Activated CD4-positive, alpha-beta T cell treated with anti-CD3 and anti-CD28 coated beads, Interleukin-2, amount 10 ng/mL, durations not matched to agents 24 days and 14 days (primary cell): ENCODE measurements at regions of chr19 and their contacts with region 1.

Region 1: GRCh38 chr19:10717356-10718204 is at the start of gene DNM2:
- DNase-seq: peak; percentile 100
- H3K4me3 Mint-ChIP-seq: peak within 1 kb of the TSS; percentile 99
- H3K27ac Mint-ChIP-seq: peak within 1 kb of the TSS; percentile 83
- H3K4me1 Mint-ChIP-seq: peaks cover 22% of the 10 kb centered on the region
- H3K27me3 Mint-ChIP-seq: no peaks in the 10 kb centered on the region
- total RNA-seq, gene DNM2: 198 and 211 TPM in 2 replicates

Region 2: DNA sequence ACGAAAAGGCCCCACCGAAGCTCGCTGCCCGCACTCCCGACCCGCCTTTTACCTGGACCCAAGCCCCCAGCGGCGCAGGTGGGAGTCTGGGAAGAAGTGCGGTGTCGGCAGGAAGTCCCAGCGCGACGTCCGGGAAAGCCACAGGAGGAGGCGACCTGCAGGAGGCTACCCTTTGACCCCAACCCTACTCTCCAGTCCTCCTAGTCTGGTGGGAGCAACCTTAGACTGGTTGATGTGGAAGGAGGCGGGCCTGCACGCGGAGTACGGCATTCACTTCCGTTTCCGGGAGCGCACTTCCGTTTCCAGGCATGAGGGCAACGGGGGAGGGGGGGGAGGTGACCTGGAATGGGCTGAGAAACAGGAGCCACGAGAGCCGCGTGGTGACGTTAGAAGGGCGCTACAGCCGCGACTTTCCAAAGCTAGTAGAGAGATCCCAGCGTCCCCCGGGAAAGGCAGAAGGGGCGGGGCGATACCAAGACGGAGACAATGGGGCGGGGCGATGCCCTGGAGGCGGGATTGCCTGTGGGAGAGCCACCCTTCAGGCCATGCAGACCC is 1310.7 kb before region 1 on chr19:
- intact Hi-C with region 1: no loop called
- DNase-seq: peak; percentile 68
- H3K4me3 Mint-ChIP-seq: peak overlapping the region; percentile 77
- H3K27ac Mint-ChIP-seq: no peak overlapping the region
- H3K4me1 Mint-ChIP-seq: no peaks in the 10 kb centered on the region
- H3K27me3 Mint-ChIP-seq: no peaks in the 10 kb centered on the region

Region 3: GRCh38 chr19:10730923-10731322 is 13.3 kb after region 1 on chr19:
- intact Hi-C with region 1: loop called (anchors 1 kb)
- DNase-seq: no peak
- H3K4me3 Mint-ChIP-seq: no peak overlapping the region
- H3K27ac Mint-ChIP-seq: peak overlapping the region; percentile 90
- H3K4me1 Mint-ChIP-seq: peaks cover 37% of the 10 kb centered on the region
- H3K27me3 Mint-ChIP-seq: no peaks in the 10 kb centered on the region

Region 4: GRCh38 chr19:10760273-10760944 is 42.8 kb after region 1 on chr19:
- intact Hi-C with region 1: loop called (anchors 1 kb)
- DNase-seq: peak; percentile 75
- H3K4me3 Mint-ChIP-seq: peak overlapping the region; percentile 76
- H3K27ac Mint-ChIP-seq: peak overlapping the region; percentile 89
- H3K4me1 Mint-ChIP-seq: peaks cover 74% of the 10 kb centered on the region
- H3K27me3 Mint-ChIP-seq: no peaks in the 10 kb centered on the region

Region 5: DNA sequence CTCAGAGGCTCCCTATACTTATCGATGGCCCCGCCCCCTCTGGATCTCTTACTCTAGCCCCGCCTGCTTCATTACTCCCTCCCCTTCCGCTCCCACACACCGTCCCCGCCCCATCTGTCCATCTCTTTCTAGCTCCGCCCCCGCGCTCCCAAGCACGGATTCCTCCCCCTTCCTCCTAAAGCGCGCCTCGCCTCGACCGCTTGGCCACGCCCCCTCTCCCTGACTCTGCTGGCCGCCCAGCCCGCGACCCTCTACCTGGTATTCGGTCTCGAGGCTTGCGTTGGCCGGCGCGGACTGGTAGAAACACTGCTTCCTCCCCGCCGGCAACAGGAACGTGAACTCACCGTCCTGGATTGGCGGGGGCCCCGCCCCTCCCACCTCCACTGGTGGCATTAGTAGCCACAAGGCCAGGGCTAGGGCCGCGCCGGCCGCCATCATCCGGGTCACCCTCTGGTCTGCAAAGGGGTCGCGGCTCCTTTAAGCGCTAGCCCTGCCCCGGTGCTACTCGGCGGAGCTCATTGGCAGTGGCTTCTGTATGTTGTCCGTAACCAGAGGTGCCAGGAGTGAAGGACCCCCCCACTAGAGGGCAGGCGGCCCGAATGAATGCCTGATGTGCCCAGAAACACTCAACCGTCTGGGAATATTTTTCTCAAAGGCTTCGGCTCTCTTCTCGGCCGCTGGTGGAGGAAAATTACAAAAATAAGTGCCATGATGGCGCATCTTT is 118.3 kb after region 1 on chr19 and contains the start of gene TMED1:
- intact Hi-C with region 1: loop called (anchors 1 kb)
- DNase-seq: peak; percentile 99
- H3K4me3 Mint-ChIP-seq: peak within 1 kb of the TSS; percentile 98
- H3K27ac Mint-ChIP-seq: peak within 1 kb of the TSS; percentile 99
- H3K4me1 Mint-ChIP-seq: peaks cover 10% of the 10 kb centered on the region
- H3K27me3 Mint-ChIP-seq: no peaks in the 10 kb centered on the region
- total RNA-seq, gene TMED1: 17.6 and 22.4 TPM in 2 replicates

Region 6: DNA sequence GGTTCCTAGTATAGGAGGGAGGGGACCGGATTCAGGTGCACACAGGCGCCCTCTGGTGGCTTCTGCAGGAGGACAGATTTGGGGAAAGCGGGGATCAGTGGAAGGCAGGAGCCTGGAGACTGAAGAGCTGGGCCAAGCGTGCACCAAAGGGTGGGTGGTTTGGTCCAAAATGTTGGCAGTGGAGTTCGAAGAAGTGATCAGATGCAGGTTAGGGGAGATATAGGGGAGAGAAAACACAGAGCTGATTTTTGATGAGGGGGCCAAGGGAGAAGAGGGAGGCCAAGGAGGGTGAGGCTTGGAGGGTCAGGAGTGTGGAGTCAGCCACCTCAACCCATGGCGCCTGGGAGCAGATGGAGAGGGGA is 146.9 kb after region 1 on chr19:
- intact Hi-C with region 1: loop called (anchors 1 kb)
- DNase-seq: peak; percentile 95
- H3K4me3 Mint-ChIP-seq: peak overlapping the region; percentile 8
- H3K27ac Mint-ChIP-seq: peak overlapping the region; percentile 2
- H3K4me1 Mint-ChIP-seq: peaks cover 24% of the 10 kb centered on the region
- H3K27me3 Mint-ChIP-seq: no peaks in the 10 kb centered on the region